A673 (cell line): ENCODE measurements at regions of chr2 and their contacts with region 1.

Region 1: GRCh38 chr2:145049475-145049874 is 529.6 kb upstream of the ZEB2 start:
- DNase-seq: peak; percentile 39
- H3K4me3 ChIP-seq: no peak overlapping the region
- H3K27ac ChIP-seq: peak overlapping the region; percentile 98
- H3K4me1 ChIP-seq: peaks cover 37% of the 10 kb centered on the region
- H3K27me3 ChIP-seq: no peaks in the 10 kb centered on the region
- CTCF ChIP-seq: no peak

Region 2: DNA sequence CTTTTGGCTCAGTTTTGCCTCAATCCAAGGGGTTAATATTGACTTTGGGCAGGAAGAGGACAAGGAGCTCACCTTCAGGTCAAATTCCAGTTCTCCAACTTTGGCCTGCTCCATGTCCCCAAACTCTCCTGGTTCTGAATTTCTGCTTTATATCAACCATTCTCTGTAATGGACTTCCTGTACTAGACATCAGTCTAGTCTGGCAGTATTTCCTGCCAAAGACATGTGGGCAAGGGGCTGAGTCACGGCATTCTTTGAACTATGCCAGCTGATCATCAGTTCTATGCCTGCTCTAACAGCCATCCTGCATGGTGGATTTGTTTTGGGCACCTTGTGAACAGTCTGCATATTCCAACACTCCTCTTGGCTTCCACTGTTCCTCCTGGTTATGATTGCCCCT is 729.0 kb before region 1 on chr2:
- CTCF ChIA-PET with region 1: no interaction called
- POLR2A ChIA-PET with region 1: no interaction called
- intact Hi-C with region 1: loop called (anchors 1 kb)
- DNase-seq: peak; percentile 60
- H3K4me3 ChIP-seq: no peak overlapping the region
- H3K27ac ChIP-seq: peak overlapping the region; percentile 40
- H3K4me1 ChIP-seq: peaks cover 58% of the 10 kb centered on the region
- H3K27me3 ChIP-seq: no peaks in the 10 kb centered on the region
- CTCF ChIP-seq: no peak

Region 3: DNA sequence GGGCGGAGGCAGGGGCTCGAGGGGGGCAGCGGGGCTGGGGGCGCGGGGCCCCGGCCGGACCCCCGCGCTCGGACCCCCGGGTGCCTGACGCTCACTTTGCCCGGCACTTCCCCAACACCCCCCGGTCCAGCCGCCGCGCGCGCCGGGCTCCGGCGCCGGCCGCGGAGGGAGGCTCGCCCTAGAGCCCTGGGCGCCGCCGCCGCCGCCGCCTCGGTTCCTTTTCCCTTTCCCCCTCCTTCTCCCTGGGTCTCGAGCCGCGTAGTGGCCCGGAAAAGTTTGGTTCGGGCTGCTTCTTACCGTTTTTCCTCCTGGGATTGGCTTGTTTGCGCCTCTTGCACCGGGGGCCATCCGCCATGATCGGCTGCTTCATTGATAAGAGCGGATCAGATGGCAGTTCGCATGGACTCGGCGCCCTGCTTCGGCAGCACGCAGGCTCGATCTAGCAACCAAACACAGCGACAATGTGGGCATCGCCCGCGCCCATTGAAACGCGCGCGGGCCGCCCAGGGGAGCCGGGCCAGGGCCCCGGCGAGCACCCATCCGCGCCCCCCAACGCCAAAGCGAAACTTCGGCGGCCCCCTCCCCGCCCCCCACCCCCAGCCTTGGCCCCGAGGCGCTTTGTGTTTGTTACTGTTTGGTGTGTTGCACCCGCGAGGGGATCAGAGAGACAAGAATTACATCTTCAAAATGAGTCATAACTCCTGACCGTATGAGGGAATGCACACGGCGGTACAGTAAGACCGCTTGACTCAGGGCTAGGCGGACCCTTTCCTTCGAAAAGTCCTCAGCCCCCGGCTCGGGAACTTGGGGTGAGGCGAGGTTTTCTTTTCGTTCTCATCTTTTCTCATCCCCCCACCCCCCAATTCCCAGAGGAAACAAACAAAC is 532.3 kb before region 1 on chr2:
- CTCF ChIA-PET with region 1: no interaction called
- POLR2A ChIA-PET with region 1: no interaction called
- intact Hi-C with region 1: loop called (anchors 2 kb)
- DNase-seq: peak; percentile 83
- H3K4me3 ChIP-seq: peak overlapping the region; percentile 66
- H3K27ac ChIP-seq: peak overlapping the region; percentile 98
- H3K4me1 ChIP-seq: peaks cover 24% of the 10 kb centered on the region
- H3K27me3 ChIP-seq: no peaks in the 10 kb centered on the region
- CTCF ChIP-seq: no peak

Region 4: DNA sequence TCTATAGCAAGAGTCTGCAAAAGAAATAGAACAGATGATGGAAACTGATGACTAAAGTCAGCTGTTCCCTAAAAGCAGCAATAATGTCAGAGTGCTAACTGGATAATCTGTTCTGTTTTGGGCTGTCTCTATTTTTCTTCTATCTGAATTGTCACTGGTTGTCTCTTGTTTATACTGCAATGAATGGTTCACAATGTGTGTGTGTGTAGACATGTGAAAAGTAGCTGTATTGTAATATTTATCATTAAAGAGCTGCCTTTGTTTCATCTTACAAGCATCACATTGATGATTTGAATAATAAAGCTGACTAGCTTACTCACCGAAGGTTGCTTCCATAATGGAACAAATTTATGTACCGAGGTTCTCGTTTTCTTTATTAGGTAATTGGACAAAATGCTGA is 73.6 kb before region 1 on chr2:
- CTCF ChIA-PET with region 1: no interaction called
- POLR2A ChIA-PET with region 1: no interaction called
- intact Hi-C with region 1: no loop called
- DNase-seq: no peak
- H3K4me3 ChIP-seq: no peak overlapping the region
- H3K27ac ChIP-seq: no peak overlapping the region
- H3K4me1 ChIP-seq: no peaks in the 10 kb centered on the region
- H3K27me3 ChIP-seq: no peaks in the 10 kb centered on the region
- CTCF ChIP-seq: no peak

Region 5: DNA sequence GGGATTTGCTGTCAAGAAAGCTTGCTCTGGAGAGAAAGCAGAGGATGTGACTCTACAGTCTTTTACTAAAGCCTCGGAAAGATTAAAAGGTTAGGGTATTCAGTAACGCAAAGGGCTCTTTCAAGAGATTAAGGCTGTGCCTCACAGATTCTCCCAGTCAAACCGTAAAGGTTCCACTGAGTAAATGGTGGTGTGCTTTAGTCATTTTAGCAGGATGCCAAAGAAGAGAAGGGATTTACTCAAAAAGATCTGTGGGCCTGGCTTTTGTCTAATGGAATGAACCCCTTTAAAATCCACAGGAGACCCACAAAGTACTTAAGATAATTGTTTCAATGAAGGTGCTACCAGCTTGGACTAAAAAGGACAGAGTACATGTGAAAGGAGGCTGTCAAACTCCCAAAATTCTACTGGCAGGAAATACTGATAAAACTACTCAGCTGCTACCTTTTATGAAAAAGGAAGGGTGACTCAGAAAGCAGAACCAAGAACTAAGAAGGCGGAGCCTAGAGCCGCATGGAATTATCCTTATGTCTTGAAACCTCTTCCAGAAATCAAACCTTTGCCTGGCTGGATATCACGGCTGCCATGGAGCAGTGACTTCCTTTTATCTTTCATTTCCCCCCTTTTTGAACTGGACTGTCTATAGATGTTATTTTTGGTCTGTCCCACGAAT is 140.7 kb after region 1 on chr2:
- CTCF ChIA-PET with region 1: no interaction called
- POLR2A ChIA-PET with region 1: no interaction called
- intact Hi-C with region 1: loop called (anchors 2 kb)
- DNase-seq: peak; percentile 76
- H3K4me3 ChIP-seq: no peak overlapping the region
- H3K27ac ChIP-seq: peak overlapping the region; percentile 46
- H3K4me1 ChIP-seq: peaks cover 37% of the 10 kb centered on the region
- H3K27me3 ChIP-seq: no peaks in the 10 kb centered on the region
- CTCF ChIP-seq: no peak

Region 6: GRCh38 chr2:145652571-145653545 is 603.4 kb after region 1 on chr2:
- CTCF ChIA-PET with region 1: no interaction called
- POLR2A ChIA-PET with region 1: no interaction called
- intact Hi-C with region 1: loop called (anchors 1 kb)
- DNase-seq: peak; percentile 90
- H3K4me3 ChIP-seq: no peak overlapping the region
- H3K27ac ChIP-seq: peak overlapping the region; percentile 83
- H3K4me1 ChIP-seq: peaks cover 59% of the 10 kb centered on the region
- H3K27me3 ChIP-seq: no peaks in the 10 kb centered on the region
- CTCF ChIP-seq: no peak

Region 7: GRCh38 chr2:146312899-146313298 is 1263.4 kb after region 1 on chr2:
- CTCF ChIA-PET with region 1: no interaction called
- POLR2A ChIA-PET with region 1: interaction called, 3 read pairs
- intact Hi-C with region 1: loop called (anchors 1 kb)
- DNase-seq: peak; percentile 97
- H3K4me3 ChIP-seq: no peak overlapping the region
- H3K27ac ChIP-seq: peak overlapping the region; percentile 66
- H3K4me1 ChIP-seq: peaks cover 52% of the 10 kb centered on the region
- H3K27me3 ChIP-seq: no peaks in the 10 kb centered on the region
- CTCF ChIP-seq: peak; percentile 59

Region 8: GRCh38 chr2:146388757-146389156 is 1339.3 kb after region 1 on chr2:
- CTCF ChIA-PET with region 1: no interaction called
- POLR2A ChIA-PET with region 1: no interaction called
- intact Hi-C with region 1: no loop called
- DNase-seq: peak; percentile 33
- H3K4me3 ChIP-seq: no peak overlapping the region
- H3K27ac ChIP-seq: no peak overlapping the region
- H3K4me1 ChIP-seq: no peaks in the 10 kb centered on the region
- H3K27me3 ChIP-seq: no peaks in the 10 kb centered on the region
- CTCF ChIP-seq: no peak